GM12878 (cell line): ENCODE measurements at regions of chr5 and their contacts with region 1.

Region 1: GRCh38 chr5:75668977-75669689 is 48.1 kb downstream of the POC5 start:
- DNase-seq: peak; percentile 78
- ATAC-seq: peak; percentile 97
- H3K4me3 ChIP-seq: peak overlapping the region; percentile 49
- H3K27ac ChIP-seq: peak overlapping the region; percentile 63
- H3K4me1 ChIP-seq: peaks cover 10% of the 10 kb centered on the region
- H3K27me3 ChIP-seq: no peaks in the 10 kb centered on the region
- CTCF ChIP-seq: no peak
- EP300 ChIP-seq: 0 out of 4 replicates have a peak, but pooled peaks of 1 of the 2 experiments have one; percentile 14
- POLR2A ChIP-seq: peak; percentile 78
- RAD21 ChIP-seq: peak; percentile 34; the same call in 1 of the 2 replicates

Region 2: DNA sequence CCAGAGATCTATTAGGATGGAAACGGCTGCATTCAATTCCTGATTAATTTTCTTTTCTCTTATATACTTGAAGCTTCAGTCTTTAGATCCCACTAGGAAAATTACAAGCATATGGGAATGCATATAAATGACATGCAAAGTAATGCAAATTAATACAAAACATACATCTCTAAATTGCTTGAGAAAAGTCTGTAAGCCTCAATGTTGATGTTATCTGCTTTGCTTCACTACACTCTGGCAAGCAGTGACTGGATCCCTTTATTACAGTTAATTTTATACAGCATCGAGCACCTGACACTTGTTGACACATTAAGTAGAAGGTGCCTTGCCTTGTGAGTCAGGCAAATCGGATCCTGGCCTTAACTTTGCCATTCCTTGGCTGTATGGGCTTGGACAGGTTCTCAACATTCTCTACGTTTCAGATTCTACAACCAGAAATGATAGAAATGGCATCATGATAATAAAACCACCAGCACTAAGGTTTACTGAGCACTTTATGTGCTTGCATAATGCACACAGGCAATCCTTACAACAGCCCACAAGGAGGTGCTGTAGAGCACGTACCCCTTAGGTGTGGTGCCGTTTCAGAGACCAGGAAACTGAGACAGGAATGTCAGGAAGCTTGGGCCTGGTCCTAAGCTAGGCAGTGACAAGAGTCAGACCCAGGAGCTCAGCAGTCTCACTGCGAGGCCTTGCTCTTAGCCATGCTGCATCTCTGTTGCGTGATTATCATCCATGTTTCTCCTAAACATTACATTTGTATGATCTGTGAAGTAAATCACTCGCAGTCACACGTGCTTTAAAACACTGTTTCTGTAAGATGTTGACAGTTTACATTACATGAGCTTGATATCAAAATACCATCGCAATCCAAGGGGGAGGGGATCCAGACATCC is 619.4 kb before region 1 on chr5:
- CTCF ChIA-PET with region 1: no interaction called
- POLR2A ChIA-PET with region 1: no interaction called
- RAD21 ChIA-PET with region 1: no interaction called
- SMC1A ChIA-PET with region 1: no interaction called
- in situ Hi-C with region 1: no loop called
- intact Hi-C with region 1: loop called (anchors 10 kb)
- DNase-seq: no peak
- ATAC-seq: peak; percentile 64
- H3K4me3 ChIP-seq: 0 out of 2 replicates have a peak overlapping the region, but pooled peaks have one; percentile 34
- H3K27ac ChIP-seq: no peak overlapping the region
- H3K4me1 ChIP-seq: peaks cover 9% of the 10 kb centered on the region
- H3K27me3 ChIP-seq: peaks cover 6 to 13% of the 10 kb centered on the region in 2 experiments; a peak in 3 of 4 replicates
- CTCF ChIP-seq: peak; percentile 59 to 76 (median 75)
- EP300 ChIP-seq: no peak
- POLR2A ChIP-seq: no peak
- RAD21 ChIP-seq: peak; percentile 52

Region 3: GRCh38 chr5:75412111-75412990 is 256.8 kb before region 1 on chr5:
- CTCF ChIA-PET with region 1: interaction called, 3 read pairs
- POLR2A ChIA-PET with region 1: no interaction called
- RAD21 ChIA-PET with region 1: no interaction called
- SMC1A ChIA-PET with region 1: interaction called, 3 read pairs
- in situ Hi-C with region 1: no loop called
- intact Hi-C with region 1: loop called (anchors 10 kb)
- DNase-seq: no peak
- ATAC-seq: peak; percentile 34; the same call in 1 of the 3 replicates
- H3K4me3 ChIP-seq: no peak overlapping the region
- H3K27ac ChIP-seq: no peak overlapping the region
- H3K4me1 ChIP-seq: no peaks in the 10 kb centered on the region
- H3K27me3 ChIP-seq: no peaks in the 10 kb centered on the region
- CTCF ChIP-seq: no peak
- EP300 ChIP-seq: no peak
- POLR2A ChIP-seq: no peak
- RAD21 ChIP-seq: no peak

Region 4: GRCh38 chr5:75566710-75567309 is 102.3 kb before region 1 on chr5:
- CTCF ChIA-PET with region 1: interaction called, 4 read pairs
- POLR2A ChIA-PET with region 1: interaction called, 8 read pairs
- RAD21 ChIA-PET with region 1: interaction called, 12 read pairs
- SMC1A ChIA-PET with region 1: interaction called, 11 read pairs
- in situ Hi-C with region 1: no loop called
- intact Hi-C with region 1: no loop called
- DNase-seq: peak; percentile 92
- ATAC-seq: peak; percentile 86
- H3K4me3 ChIP-seq: peak overlapping the region; percentile 29; the same call in 1 of the 2 replicates
- H3K27ac ChIP-seq: peak overlapping the region; percentile 96
- H3K4me1 ChIP-seq: peaks cover 36% of the 10 kb centered on the region
- H3K27me3 ChIP-seq: no peaks in the 10 kb centered on the region
- CTCF ChIP-seq: no peak
- EP300 ChIP-seq: peak; percentile 18 to 86; a peak in 2 of 4 replicates
- POLR2A ChIP-seq: no peak
- RAD21 ChIP-seq: peak; percentile 16; the same call in 1 of the 2 replicates

Region 5: GRCh38 chr5:75584641-75585040 is 84.5 kb before region 1 on chr5:
- CTCF ChIA-PET with region 1: interaction called, 5 read pairs
- POLR2A ChIA-PET with region 1: no interaction called
- RAD21 ChIA-PET with region 1: interaction called, 3 read pairs
- SMC1A ChIA-PET with region 1: interaction called, 12 read pairs
- in situ Hi-C with region 1: no loop called
- intact Hi-C with region 1: no loop called
- DNase-seq: no peak
- ATAC-seq: no peak
- H3K4me3 ChIP-seq: no peak overlapping the region
- H3K27ac ChIP-seq: no peak overlapping the region
- H3K4me1 ChIP-seq: no peaks in the 10 kb centered on the region
- H3K27me3 ChIP-seq: no peaks in the 10 kb centered on the region
- CTCF ChIP-seq: 0 out of 6 replicates have a peak, but pooled peaks of 1 of the 3 experiments have one; percentile 9
- EP300 ChIP-seq: no peak
- POLR2A ChIP-seq: no peak
- RAD21 ChIP-seq: peak; percentile 22